Posterior vena cava (tissue), 2 donors: ENCODE measurements at regions of chr15 and their contacts with region 1.

Region 1: DNA sequence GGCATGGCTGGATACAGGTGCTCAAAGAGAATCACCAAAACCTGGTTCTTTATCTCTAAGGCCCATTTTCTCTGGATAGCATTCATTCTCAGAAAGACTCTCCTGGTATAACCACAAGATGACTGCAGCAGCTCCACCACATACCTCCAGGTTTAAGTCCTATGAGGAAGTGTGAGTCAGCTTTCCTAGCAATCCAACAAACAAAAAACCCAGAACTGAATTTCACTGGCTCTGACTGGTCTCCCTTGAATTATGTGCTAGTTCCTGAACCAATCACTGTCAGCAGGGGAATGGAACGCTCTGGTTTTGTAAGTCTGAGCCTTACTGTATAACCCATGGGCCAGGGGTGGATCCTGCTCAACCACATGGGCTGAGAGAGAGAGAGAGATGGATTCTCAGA is 27.2 kb downstream of the MRPL46 start:
- DNase-seq: no peak

Region 2: GRCh38 chr15:88465633-88466224 is 25.7 kb after region 1 on chr15:
- intact Hi-C with region 1: loop called in 1 of 2 experiments (anchors 1 kb)
- DNase-seq: no peak